ENCODE measurements at regions of chr3 and their contacts with region 1.

Region 1: GRCh38 chr3:129087138-129087702 is 26.6 kb downstream of the GP9 start:
- DNase-seq: no peak
- ATAC-seq: no peak
- H3K4me3 ChIP-seq: no peak overlapping the region
- H3K27ac ChIP-seq: no peak overlapping the region
- H3K4me1 ChIP-seq: peaks cover 0 to 10% of the 10 kb centered on the region in 2 experiments; a peak in 3 of 5 replicates
- H3K27me3 ChIP-seq: no peaks in the 10 kb centered on the region
- CTCF ChIP-seq: no peak
- EP300 ChIP-seq: no peak
- POLR2A ChIP-seq: no peak
- RAD21 ChIP-seq: no peak

Region 2: GRCh38 chr3:128969993-128970739 is 117.1 kb before region 1 on chr3:
- CTCF ChIA-PET with region 1: no interaction called
- POLR2A ChIA-PET with region 1: no interaction called
- in situ Hi-C with region 1: loop called (anchors 10 kb)
- intact Hi-C with region 1: loop called (anchors 5 kb)
- DNase-seq: peak; percentile 35 to 59 (median 48)
- ATAC-seq: peak; percentile 79
- H3K4me3 ChIP-seq: no peak overlapping the region
- H3K27ac ChIP-seq: no peak overlapping the region
- H3K4me1 ChIP-seq: no peaks in the 10 kb centered on the region; a peak in 2 of 5 replicates
- H3K27me3 ChIP-seq: peaks cover 0 to 19% of the 10 kb centered on the region in 2 experiments; a peak in 2 of 5 replicates
- CTCF ChIP-seq: peak; percentile 74 to 83 (median 82)
- EP300 ChIP-seq: no peak
- POLR2A ChIP-seq: no peak
- RAD21 ChIP-seq: peak; percentile 73 to 80

Region 3: DNA sequence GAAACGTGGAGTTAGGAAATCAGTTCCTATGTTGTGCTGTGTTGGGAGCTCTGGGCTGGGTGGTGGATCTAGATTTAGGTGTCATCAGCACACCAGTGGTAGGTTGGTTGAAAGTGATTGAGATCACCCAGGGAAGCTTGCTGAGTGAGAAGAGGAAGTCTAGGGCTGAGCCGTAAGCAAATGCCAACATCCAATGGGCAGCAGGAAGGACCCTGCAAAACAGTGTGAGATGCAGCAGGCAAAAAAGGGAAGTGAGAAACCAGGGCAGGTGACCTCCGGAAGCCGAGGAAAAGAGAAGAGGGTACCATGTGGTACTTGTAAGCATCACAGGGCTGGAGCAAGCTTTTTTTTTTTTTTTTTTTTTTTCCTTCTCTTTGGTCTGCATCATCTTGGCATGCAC is 146.3 kb after region 1 on chr3:
- CTCF ChIA-PET with region 1: no interaction called
- POLR2A ChIA-PET with region 1: no interaction called
- in situ Hi-C with region 1: no loop called
- intact Hi-C with region 1: no loop called
- DNase-seq: no peak
- ATAC-seq: no peak
- H3K4me3 ChIP-seq: no peak overlapping the region
- H3K27ac ChIP-seq: no peak overlapping the region
- H3K4me1 ChIP-seq: peaks cover 20 to 28% of the 10 kb centered on the region in 2 experiments; a peak in 4 of 5 replicates
- H3K27me3 ChIP-seq: no peaks in the 10 kb centered on the region
- CTCF ChIP-seq: no peak
- EP300 ChIP-seq: no peak
- POLR2A ChIP-seq: no peak
- RAD21 ChIP-seq: no peak

Region 4: GRCh38 chr3:130992344-130992743 is 1905.1 kb after region 1 on chr3:
- CTCF ChIA-PET with region 1: no interaction called
- POLR2A ChIA-PET with region 1: no interaction called
- in situ Hi-C with region 1: no loop called
- intact Hi-C with region 1: no loop called
- DNase-seq: no peak
- ATAC-seq: no peak
- H3K4me3 ChIP-seq: no peak overlapping the region
- H3K27ac ChIP-seq: no peak overlapping the region
- H3K4me1 ChIP-seq: no peaks in the 10 kb centered on the region
- H3K27me3 ChIP-seq: no peaks in the 10 kb centered on the region
- CTCF ChIP-seq: no peak
- EP300 ChIP-seq: no peak
- POLR2A ChIP-seq: no peak
- RAD21 ChIP-seq: no peak

Measured in K562 (cell line).